ENCODE measurements at regions of chr18 and their contacts with region 1.

Region 1: DNA sequence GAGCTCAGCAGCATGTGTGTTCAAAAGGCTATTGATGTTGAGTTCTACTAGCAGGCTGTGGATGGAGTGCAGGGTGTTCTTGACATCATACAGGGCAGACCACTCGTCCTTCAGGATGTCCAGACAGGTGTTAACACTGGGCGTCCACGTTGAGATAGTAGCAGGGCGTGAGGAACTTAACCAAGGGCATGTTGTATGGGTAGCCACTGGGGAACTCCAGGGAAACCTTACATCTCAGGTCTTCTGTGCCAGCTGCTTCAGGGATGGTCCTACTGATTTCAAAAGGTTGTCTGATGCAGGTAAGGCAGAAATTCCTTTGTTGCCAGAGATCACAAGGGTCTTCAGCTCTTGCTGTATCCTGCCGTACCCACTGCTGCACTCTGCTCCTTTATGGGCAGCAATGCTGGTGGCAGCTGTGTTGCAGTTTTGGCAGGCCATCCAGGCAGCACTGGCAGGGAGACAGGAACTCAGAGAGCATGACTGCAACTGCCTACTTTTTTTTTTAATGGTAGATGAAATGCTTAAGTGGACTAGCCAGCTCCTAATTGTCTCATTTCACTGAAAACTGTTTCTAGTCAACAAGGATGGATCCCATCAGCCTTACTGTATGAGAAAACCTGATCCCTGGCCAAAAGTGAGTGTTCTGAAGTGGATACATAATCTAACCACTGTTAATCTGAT is 32.4 kb upstream of the RBBP8 start:
- DNase-seq: no peak
- ATAC-seq: no peak
- H3K4me3 ChIP-seq: no peak overlapping the region
- H3K27ac ChIP-seq: no peak overlapping the region
- H3K4me1 ChIP-seq: no peaks in the 10 kb centered on the region
- H3K27me3 ChIP-seq: no peaks in the 10 kb centered on the region
- CTCF ChIP-seq: no peak

Region 2: DNA sequence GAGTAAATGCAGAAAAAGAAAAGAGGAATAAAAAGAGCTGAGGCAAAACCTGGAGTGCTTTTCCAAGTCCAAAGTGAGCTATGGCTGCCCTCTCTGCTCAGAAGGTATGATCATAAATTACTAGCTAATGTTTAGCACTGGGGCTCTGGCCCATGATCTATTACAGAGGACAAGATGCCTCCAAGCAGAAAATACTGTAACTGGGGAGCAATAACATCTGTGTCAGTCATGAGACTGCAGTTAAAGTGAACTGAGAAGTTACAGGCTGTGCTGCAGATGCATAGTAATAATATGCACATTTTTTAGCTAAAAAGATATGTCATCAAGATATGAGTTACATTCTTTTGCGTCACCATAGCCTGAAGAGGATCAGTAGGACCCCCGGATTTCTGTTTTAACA is 176.9 kb before region 1 on chr18:
- CTCF ChIA-PET with region 1: no interaction called
- POLR2A ChIA-PET with region 1: no interaction called
- intact Hi-C with region 1: no loop called
- DNase-seq: no peak
- ATAC-seq: no peak
- H3K4me3 ChIP-seq: no peak overlapping the region
- H3K27ac ChIP-seq: no peak overlapping the region
- H3K4me1 ChIP-seq: no peaks in the 10 kb centered on the region
- H3K27me3 ChIP-seq: no peaks in the 10 kb centered on the region
- CTCF ChIP-seq: no peak

Region 3: DNA sequence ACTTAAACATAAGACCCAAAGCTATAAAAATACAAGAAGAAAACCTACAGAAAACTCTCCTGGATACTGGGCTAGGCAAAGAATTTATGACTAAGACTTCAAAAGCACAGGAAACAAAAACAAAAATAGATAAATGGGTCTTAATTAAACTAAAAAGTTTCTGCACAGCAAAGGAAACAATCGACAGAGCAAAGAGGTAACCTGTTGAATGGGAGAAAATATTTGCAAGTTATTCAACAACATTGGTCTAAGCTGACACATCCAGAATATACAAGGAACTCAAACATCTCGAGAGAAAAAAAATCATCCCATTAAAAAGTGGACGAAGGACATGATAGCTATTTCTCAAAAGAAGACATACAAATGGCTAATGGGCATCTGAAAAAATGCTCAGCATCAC is 39.9 kb before region 1 on chr18:
- CTCF ChIA-PET with region 1: no interaction called
- POLR2A ChIA-PET with region 1: no interaction called
- intact Hi-C with region 1: loop called (anchors 5 kb)
- DNase-seq: no peak
- ATAC-seq: no peak
- H3K4me3 ChIP-seq: no peak overlapping the region
- H3K27ac ChIP-seq: no peak overlapping the region
- H3K4me1 ChIP-seq: no peaks in the 10 kb centered on the region
- H3K27me3 ChIP-seq: no peaks in the 10 kb centered on the region
- CTCF ChIP-seq: no peak

Region 4: DNA sequence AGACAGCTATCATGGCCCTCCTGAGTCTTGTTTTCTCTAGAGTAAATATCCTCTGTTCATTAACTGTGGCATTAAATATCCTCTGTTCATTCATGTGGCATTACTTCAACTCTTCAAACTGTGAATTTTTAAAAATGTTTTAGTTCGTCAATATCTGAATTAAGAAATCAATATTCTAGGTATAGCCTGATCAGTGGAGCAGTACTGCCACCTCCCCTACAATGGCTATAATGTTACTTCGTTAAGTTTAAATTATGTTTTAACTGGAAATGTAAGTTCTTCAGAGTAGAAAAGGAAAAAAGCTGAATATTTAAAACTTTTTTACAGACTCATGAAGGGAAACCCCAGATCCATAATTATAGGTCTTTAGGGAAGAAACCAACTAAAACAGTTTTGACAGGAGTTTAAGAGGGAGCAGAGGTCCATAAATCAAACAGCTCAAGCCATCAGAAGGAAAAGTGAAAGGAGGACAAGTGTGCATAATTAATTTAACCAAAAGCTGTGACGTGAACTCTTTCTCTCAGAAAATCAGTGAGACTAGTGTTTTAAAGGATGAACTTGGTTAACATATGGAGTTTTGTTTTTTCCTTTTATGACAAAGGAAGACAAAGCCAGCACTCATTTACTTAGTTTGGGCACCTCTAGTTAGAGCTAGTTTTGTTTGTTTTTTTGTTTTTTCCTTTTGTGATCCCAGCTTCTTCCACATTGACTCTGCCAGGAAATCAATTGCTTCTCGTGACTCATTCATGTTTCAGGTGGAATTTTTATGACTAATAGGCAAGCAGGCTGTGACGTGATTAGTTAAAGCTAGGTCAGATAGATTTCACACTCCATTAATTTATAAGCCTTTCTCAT is 77.4 kb after region 1 on chr18:
- CTCF ChIA-PET with region 1: no interaction called
- POLR2A ChIA-PET with region 1: interaction called, 10 read pairs
- intact Hi-C with region 1: no loop called
- DNase-seq: peak; percentile 83
- ATAC-seq: peak; percentile 92
- H3K4me3 ChIP-seq: no peak overlapping the region
- H3K27ac ChIP-seq: peak overlapping the region; percentile 78
- H3K4me1 ChIP-seq: peaks cover 17% of the 10 kb centered on the region
- H3K27me3 ChIP-seq: no peaks in the 10 kb centered on the region
- CTCF ChIP-seq: no peak

Region 5: DNA sequence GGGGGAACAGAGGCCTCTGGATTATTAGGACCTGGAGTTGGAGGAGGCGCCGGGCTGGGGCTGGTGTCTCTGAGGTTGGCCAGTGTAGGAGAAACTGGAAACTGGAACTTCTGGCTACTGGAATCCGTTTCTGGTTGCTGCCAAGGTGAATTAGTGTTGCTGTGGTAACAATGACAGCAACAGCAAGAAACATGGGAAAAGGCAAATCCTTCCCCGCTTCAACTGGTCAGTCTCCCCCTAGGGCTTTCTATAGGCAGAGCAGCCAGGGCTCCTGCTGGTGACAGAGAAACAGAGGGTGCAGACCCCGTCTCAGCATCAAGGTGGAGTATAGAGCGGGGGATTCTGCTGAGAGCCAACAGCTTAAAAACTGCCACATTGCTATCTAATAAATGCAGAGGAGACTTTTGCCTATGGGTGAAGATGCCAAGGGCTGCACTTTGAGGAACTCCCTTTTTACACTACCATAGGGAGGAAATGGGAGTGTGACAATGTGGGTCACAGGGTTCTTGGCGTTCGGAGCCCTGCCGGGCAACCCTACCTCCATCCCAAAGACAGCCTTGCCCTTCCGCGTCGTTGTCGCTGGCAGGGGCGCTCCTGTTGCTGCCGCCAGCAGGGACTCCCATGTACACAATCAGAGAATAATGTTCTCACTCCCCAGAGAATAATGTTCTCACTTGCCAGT is 153.2 kb after region 1 on chr18:
- CTCF ChIA-PET with region 1: no interaction called
- POLR2A ChIA-PET with region 1: no interaction called
- intact Hi-C with region 1: no loop called
- DNase-seq: peak; percentile 57
- ATAC-seq: peak; percentile 72
- H3K4me3 ChIP-seq: no peak overlapping the region
- H3K27ac ChIP-seq: no peak overlapping the region
- H3K4me1 ChIP-seq: peaks cover 8% of the 10 kb centered on the region; the same call in 1 of the 2 replicates
- H3K27me3 ChIP-seq: no peaks in the 10 kb centered on the region
- CTCF ChIP-seq: peak; percentile 52